ENCODE measurements at regions of chr16 and their contacts with region 1.

Region 1: DNA sequence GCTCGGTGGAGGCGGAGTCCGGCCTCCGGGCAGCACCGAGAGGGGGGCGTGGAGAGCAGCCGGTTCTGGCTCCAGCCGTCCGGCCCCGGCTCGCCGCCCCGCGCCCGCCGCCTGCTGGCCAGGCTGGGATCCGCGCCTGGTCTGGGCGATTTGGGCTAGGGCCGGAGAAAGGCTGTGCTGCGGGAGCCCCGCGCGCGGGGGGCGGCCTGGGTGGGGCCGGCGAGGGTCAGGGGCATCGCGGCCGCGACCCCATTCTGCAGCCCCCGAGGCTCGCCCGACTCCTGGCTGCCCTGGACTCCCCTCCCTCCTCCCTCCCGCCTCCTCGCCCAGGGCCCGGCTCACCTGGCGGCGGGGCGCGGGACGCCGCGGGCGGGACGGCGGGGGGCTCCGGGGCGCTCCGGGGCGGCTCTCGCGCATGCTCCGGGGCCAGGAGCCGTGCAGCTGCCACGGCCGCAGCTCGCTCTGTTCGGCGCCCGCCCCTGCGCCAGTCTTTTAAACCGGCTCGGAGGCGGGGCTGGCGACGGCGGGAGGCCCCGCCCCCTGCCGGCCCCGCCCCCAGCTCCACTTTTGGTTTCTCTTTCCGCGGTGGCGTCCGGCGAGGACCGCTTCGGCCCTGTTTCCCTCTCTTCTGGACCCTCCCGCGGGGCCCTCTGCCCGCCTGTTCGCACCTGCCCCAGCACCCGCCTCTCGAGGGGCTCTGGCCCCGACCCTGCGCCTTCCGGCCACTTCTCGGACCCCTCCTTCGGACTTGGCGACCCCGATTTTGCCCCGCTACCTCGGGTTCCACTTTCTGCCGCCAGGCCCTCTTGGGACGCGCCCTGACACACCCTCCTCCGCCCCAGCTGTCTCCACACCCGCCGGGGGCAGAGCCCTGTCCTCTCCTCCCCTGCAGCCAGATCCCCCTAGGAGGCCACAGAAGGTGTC is at the start of gene SOCS1:
- DNase-seq: peak; percentile 75 to 94 (median 87)
- ATAC-seq: peak; percentile 64
- H3K4me3 ChIP-seq: peak within 1 kb of the TSS; percentile 90 to 96
- H3K4me3 Mint-ChIP-seq: peak within 1 kb of the TSS; percentile 97
- H3K27ac ChIP-seq: peak within 1 kb of the TSS; percentile 81 to 93
- H3K27ac Mint-ChIP-seq: peak within 1 kb of the TSS; percentile 96
- H3K4me1 ChIP-seq: peaks cover 61% of the 10 kb centered on the region
- H3K4me1 Mint-ChIP-seq: peaks cover 56% of the 10 kb centered on the region
- H3K27me3 ChIP-seq: no peaks in the 10 kb centered on the region
- H3K27me3 Mint-ChIP-seq: no peaks in the 10 kb centered on the region
- CTCF ChIP-seq: peak; percentile 77
- total RNA-seq, gene SOCS1: 74.5 to 75.6 TPM

Region 2: GRCh38 chr16:10944249-10945064 is 311.5 kb before region 1 on chr16 and contains the start of gene CLEC16A:
- CTCF ChIA-PET with region 1: interaction called, 7 read pairs
- POLR2A ChIA-PET with region 1: interaction called, 3 read pairs
- intact Hi-C with region 1: loop called in 1 of 2 experiments (anchors 5 kb)
- DNase-seq: peak; percentile 91 to 98 (median 93)
- ATAC-seq: peak; percentile 70
- H3K4me3 ChIP-seq: peak within 1 kb of the TSS; percentile 66 to 76
- H3K4me3 Mint-ChIP-seq: peak within 1 kb of the TSS; percentile 93
- H3K27ac ChIP-seq: peak within 1 kb of the TSS; percentile 38 to 65
- H3K27ac Mint-ChIP-seq: peak within 1 kb of the TSS; percentile 82
- H3K4me1 ChIP-seq: peaks cover 60% of the 10 kb centered on the region
- H3K4me1 Mint-ChIP-seq: peaks cover 71% of the 10 kb centered on the region
- H3K27me3 ChIP-seq: no peaks in the 10 kb centered on the region
- H3K27me3 Mint-ChIP-seq: no peaks in the 10 kb centered on the region
- CTCF ChIP-seq: no peak
- total RNA-seq, gene CLEC16A: 20.5 to 21.9 TPM

Region 3: GRCh38 chr16:11114366-11115164 is 141.4 kb before region 1 on chr16:
- CTCF ChIA-PET with region 1: interaction called, 4 read pairs
- POLR2A ChIA-PET with region 1: no interaction called
- intact Hi-C with region 1: loop called in 1 of 2 experiments (anchors 10 kb)
- DNase-seq: peak in 4 of 9 experiments; percentile 18 to 70 (median 34)
- ATAC-seq: peak; percentile 72
- H3K4me3 ChIP-seq: peak overlapping the region in 1 of 2 experiments; percentile 11
- H3K4me3 Mint-ChIP-seq: peak overlapping the region; percentile 60
- H3K27ac ChIP-seq: peak overlapping the region in 1 of 2 experiments; percentile 40
- H3K27ac Mint-ChIP-seq: peak overlapping the region; percentile 53
- H3K4me1 ChIP-seq: peaks cover 22% of the 10 kb centered on the region
- H3K4me1 Mint-ChIP-seq: peaks cover 30% of the 10 kb centered on the region
- H3K27me3 ChIP-seq: no peaks in the 10 kb centered on the region
- H3K27me3 Mint-ChIP-seq: no peaks in the 10 kb centered on the region
- CTCF ChIP-seq: no peak

Region 4: DNA sequence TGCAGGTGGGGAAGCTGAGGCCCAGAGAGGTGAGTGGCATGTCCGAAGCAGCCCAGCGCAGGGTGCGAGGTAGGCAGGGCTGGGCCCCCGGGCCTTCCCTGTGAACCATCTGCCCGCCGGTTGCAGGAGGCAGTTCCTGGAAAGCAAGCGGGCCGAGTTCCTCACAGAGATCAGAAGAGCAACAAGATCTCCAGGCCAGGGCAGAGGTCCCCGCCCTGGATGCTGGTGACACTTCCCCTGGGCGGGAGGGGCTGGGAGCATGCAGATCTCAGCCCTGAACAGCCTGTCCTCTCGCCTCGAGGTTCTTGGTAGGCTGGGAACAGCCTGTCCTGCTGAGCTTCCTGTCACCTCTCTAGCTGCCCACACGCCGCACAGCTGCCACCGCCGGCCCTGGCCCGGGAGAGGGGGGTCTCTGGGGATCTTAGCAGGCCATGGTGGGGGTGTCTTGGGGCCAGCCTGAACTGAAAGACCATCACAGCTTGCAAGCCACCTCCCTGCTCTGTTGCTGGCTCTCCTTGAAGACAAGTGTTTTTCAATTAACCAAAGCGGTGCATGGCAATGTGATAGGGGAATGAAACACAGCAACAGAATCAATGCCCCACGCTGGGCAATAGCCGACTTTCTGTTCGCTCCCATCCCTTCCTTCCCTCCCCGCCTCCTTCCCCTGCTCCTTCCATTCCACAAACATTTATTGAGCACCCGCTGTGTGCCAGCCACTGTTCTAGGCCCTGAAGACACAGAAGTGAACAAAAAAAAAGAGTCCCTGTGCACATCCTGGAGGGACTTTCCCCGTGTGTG is 31.7 kb before region 1 on chr16:
- CTCF ChIA-PET with region 1: interaction called, 30 read pairs
- POLR2A ChIA-PET with region 1: interaction called, 64 read pairs
- intact Hi-C with region 1: loop called (anchors 1 to 2 kb)
- DNase-seq: peak; percentile 17 to 79 (median 57)
- ATAC-seq: peak; percentile 37
- H3K4me3 ChIP-seq: peak overlapping the region in 1 of 2 experiments; percentile 27
- H3K4me3 Mint-ChIP-seq: peak overlapping the region; percentile 75
- H3K27ac ChIP-seq: peak overlapping the region; percentile 77 to 92
- H3K27ac Mint-ChIP-seq: peak overlapping the region; percentile 99
- H3K4me1 ChIP-seq: peaks cover 35% of the 10 kb centered on the region
- H3K4me1 Mint-ChIP-seq: peaks cover 40% of the 10 kb centered on the region
- H3K27me3 ChIP-seq: no peaks in the 10 kb centered on the region
- H3K27me3 Mint-ChIP-seq: no peaks in the 10 kb centered on the region
- CTCF ChIP-seq: no peak

Region 5: DNA sequence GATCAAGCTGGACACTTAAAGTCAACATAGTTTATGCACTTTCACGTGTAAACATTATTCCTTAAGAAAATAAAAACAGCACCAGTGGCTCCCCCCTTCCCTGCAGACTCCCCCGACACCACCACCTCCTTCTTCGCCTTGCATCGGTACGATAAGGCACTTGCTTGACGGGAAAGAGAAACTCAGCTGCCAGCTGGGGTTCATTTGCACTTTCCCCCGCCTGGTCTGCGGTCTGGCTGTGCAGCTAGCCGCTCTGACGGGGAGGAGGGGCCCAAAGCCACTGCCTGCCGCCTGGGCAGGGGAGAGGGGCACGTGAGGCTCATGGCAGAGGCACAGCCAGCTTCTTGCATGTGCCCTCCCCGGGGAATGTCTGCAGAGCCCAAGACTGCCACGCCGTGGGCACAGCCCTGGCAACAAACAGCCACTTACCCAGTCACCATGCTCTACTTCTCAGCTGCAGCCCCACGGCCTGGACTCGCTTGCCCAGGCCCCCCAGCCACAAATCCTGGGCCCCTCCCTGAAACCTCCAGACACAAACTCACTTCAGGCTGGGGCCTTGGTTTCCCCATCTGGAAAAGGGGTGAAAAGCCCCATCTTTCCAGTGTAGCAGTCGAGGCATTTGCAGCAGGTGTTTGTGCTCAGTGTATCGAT is 41.6 kb after region 1 on chr16:
- CTCF ChIA-PET with region 1: interaction called, 38 read pairs
- POLR2A ChIA-PET with region 1: interaction called, 7 read pairs
- intact Hi-C with region 1: loop called in 1 of 2 experiments (anchors 2 kb)
- DNase-seq: peak; percentile 49 to 85 (median 76)
- ATAC-seq: peak; percentile 83
- H3K4me3 ChIP-seq: peak overlapping the region; percentile 20 to 53
- H3K4me3 Mint-ChIP-seq: peak overlapping the region; percentile 76
- H3K27ac ChIP-seq: no peak overlapping the region
- H3K27ac Mint-ChIP-seq: peak overlapping the region; percentile 73
- H3K4me1 ChIP-seq: peaks cover 38% of the 10 kb centered on the region
- H3K4me1 Mint-ChIP-seq: peaks cover 35% of the 10 kb centered on the region
- H3K27me3 ChIP-seq: peaks cover 0 to 4% of the 10 kb centered on the region in 2 experiments
- H3K27me3 Mint-ChIP-seq: peaks cover 2% of the 10 kb centered on the region
- CTCF ChIP-seq: no peak

Region 6: DNA sequence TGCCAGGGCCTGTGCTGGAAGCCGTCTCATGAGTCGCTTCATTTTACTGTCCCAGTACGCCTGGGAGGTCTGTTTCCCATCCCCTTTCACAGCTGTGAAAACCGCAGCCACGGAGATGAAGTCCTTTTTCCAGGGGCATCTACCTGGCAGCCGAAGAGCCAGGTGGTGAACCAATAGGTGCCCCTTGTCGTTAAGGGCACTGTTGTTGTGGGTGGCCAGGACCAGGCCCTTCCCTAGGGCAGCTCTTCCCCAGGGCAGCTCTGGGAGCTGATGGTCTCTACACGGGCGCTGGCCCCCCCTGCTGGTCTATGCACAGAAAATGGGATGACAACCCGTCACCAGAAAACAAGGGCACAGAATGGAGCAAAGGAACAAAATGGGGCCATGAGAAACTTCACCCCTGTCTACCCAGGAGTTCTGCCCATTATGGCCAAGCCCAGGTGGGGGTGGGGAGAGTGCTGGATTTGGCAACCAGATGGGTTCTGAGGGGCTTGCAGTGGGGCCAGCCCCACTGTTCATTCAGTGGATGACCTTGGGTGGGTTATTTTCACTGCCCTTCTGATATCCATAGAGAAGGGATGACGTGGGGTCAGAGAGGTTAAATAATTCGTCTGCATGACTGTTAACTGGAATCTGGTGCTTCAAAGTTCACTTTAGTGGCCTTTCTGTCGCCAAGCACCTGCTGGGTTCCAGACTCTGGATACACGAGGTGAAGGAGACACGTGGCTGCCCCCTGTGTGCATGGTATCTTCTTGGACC is 100.8 kb after region 1 on chr16:
- CTCF ChIA-PET with region 1: interaction called, 42 read pairs
- POLR2A ChIA-PET with region 1: interaction called, 57 read pairs
- intact Hi-C with region 1: loop called (anchors 1 to 2 kb)
- DNase-seq: peak in 8 of 9 experiments; percentile 38 to 75 (median 62)
- ATAC-seq: no peak
- H3K4me3 ChIP-seq: no peak overlapping the region
- H3K4me3 Mint-ChIP-seq: no peak overlapping the region
- H3K27ac ChIP-seq: no peak overlapping the region
- H3K27ac Mint-ChIP-seq: peak overlapping the region; percentile 37
- H3K4me1 ChIP-seq: peaks cover 50% of the 10 kb centered on the region
- H3K4me1 Mint-ChIP-seq: peaks cover 58% of the 10 kb centered on the region
- H3K27me3 ChIP-seq: peaks cover 0 to 23% of the 10 kb centered on the region in 2 experiments
- H3K27me3 Mint-ChIP-seq: no peaks in the 10 kb centered on the region
- CTCF ChIP-seq: peak; percentile 50

Region 7: GRCh38 chr16:11379420-11379819 is 123.4 kb after region 1 on chr16:
- CTCF ChIA-PET with region 1: no interaction called
- POLR2A ChIA-PET with region 1: no interaction called
- intact Hi-C with region 1: no loop called
- DNase-seq: peak in 3 of 9 experiments; percentile 43 to 65 (median 51)
- ATAC-seq: peak; percentile 78
- H3K4me3 ChIP-seq: no peak overlapping the region
- H3K4me3 Mint-ChIP-seq: peak overlapping the region; percentile 65
- H3K27ac ChIP-seq: no peak overlapping the region
- H3K27ac Mint-ChIP-seq: no peak overlapping the region
- H3K4me1 ChIP-seq: no peaks in the 10 kb centered on the region
- H3K4me1 Mint-ChIP-seq: peaks cover 7% of the 10 kb centered on the region
- H3K27me3 ChIP-seq: no peaks in the 10 kb centered on the region
- H3K27me3 Mint-ChIP-seq: no peaks in the 10 kb centered on the region
- CTCF ChIP-seq: no peak

Region 8: DNA sequence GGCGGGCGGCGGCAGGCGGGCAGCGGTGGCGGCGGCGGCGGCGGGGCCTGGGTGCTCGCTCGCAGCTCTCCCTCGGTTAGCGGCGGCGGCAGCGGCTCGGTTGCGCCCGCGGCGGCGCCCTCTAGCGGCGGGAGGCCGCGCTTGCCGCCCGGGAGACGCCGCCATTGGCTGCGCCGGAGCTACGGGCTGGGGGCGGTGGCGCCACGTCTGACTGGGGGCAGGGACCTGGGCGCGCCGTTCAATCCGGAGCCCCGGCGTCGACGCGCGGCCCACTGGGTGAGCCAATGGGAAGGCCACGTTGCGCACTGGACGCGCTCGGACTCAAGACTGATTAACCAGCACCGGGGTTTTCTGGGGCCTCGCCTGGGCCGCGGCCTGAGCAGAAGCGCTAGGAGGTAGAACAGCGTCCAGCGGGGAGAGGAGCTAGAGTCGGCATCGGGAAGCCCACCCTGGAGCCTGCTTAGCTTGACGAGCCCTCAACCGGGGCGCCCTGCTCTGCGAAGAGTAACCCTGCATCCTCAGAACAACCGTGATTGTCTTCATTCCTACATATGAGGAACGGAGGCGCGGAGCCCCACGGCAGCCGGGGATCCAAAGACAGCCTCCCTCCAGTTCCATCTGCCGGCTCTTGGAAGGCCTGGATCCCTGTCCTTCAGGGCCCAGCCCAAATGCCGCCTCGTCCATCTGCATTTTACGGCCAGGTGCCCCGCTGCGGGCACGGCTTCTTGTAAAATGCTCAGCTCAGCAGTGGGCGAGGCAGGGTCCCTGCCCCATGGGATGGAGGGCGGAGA is 541.4 kb after region 1 on chr16 and contains the start of gene ZC3H7A:
- CTCF ChIA-PET with region 1: no interaction called
- POLR2A ChIA-PET with region 1: interaction called, 4 read pairs
- intact Hi-C with region 1: loop called in 1 of 2 experiments (anchors 5 kb)
- DNase-seq: peak; percentile 83 to 97 (median 92)
- ATAC-seq: peak; percentile 94
- H3K4me3 ChIP-seq: peak within 1 kb of the TSS; percentile 71 to 97
- H3K4me3 Mint-ChIP-seq: peak within 1 kb of the TSS; percentile 95
- H3K27ac ChIP-seq: peak within 1 kb of the TSS; percentile 82 to 99
- H3K27ac Mint-ChIP-seq: peak within 1 kb of the TSS; percentile 99
- H3K4me1 ChIP-seq: peaks cover 72% of the 10 kb centered on the region
- H3K4me1 Mint-ChIP-seq: peaks cover 68% of the 10 kb centered on the region
- H3K27me3 ChIP-seq: no peaks in the 10 kb centered on the region
- H3K27me3 Mint-ChIP-seq: no peaks in the 10 kb centered on the region
- CTCF ChIP-seq: peak; percentile 79
- total RNA-seq, gene ZC3H7A: 105 to 106 TPM